ENCODE measurements at regions of chr4 and their contacts with region 1.

Region 1: DNA sequence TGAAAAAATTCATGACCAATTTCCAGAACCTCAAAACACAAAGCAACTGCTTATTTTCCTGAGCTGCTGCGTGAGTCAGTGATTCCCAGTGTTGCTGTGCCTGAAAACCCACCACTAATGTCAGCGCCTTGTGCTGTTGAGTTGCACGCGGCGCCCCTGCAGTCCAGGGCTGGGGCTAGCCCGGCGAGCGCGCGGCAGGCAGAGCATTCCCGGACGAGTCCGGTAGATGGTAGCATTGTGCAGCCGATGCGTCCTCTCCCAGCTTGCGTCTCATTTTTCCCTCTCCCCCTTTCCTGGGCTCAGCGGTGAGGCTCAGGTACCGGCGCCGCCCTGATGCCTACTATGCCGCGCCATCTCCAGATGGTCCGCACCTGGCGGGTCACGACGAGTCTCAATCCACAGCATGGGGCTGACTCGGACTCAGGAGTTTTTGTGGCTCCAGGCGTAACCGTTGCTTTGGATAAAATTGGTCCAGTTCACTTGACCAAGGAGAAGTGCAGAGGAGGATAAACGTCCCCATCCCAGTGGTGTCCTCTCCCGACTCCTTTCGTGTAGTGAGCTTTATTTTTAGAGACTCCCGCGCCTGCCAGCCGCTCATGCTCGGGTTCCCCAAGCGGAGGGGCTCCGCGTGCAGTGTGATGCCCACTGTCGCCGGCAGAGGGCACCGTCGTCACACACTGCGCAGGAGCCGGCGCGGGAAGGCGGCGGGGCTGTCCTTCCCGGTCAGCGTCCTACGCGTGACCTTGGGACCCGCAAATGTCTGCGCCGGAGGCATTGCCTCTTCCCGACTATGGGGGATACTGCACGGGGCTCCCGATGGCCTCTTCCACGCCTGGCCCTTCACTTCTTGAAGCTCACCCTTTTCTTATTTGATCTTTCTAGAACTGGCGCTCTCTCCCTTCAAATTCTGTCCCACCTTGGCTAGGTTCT is 53.6 kb upstream of the IGFBP7 start:
- DNase-seq: peak; percentile 76
- H3K4me3 Mint-ChIP-seq: peak overlapping the region; percentile 82
- H3K27ac Mint-ChIP-seq: peak overlapping the region; percentile 44
- H3K4me1 Mint-ChIP-seq: peaks cover 7% of the 10 kb centered on the region
- H3K27me3 Mint-ChIP-seq: peaks cover 35% of the 10 kb centered on the region
- CTCF ChIP-seq: peak; percentile 60

Region 2: GRCh38 chr4:56940971-56941370 is 222.8 kb before region 1 on chr4:
- CTCF ChIA-PET with region 1: no interaction called
- intact Hi-C with region 1: no loop called
- DNase-seq: no peak
- H3K4me3 Mint-ChIP-seq: no peak overlapping the region
- H3K27ac Mint-ChIP-seq: no peak overlapping the region
- H3K4me1 Mint-ChIP-seq: peaks cover 8% of the 10 kb centered on the region
- H3K27me3 Mint-ChIP-seq: no peaks in the 10 kb centered on the region
- CTCF ChIP-seq: no peak

Region 3: DNA sequence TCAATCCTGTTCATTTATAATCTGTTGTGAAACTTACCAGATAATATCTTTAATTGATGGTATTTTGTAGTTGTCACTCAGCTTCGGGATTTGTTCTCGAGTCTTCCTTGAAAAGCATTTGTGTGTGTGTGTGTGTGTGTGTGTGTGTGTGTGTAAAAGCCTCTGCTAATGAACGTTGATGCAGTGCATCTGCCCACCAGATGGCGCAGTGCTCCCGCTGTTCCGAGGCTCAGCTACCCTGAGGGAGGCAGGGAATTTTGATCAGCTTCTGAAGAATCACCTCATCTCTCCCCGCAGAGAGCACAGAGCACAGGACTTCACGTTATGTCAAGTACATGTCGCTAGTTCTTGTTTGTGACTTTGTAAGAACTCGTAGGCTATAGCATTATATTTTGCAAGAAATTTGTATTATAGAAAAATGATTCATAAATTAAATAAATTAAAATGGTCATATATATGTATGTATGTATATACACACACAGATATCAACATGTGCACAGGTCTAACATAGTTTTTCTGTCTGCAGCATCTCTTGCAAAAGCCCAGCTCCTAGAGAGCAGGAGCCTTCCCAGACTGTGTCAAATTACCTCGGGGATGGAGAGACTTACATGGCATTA is 263.1 kb after region 1 on chr4:
- CTCF ChIA-PET with region 1: no interaction called
- intact Hi-C with region 1: loop called (anchors 10 kb)
- DNase-seq: peak; percentile 52
- H3K4me3 Mint-ChIP-seq: no peak overlapping the region
- H3K27ac Mint-ChIP-seq: no peak overlapping the region
- H3K4me1 Mint-ChIP-seq: no peaks in the 10 kb centered on the region
- H3K27me3 Mint-ChIP-seq: no peaks in the 10 kb centered on the region
- CTCF ChIP-seq: no peak